ENCODE measurements at regions of chr6 and their contacts with region 1.

Region 1: GRCh38 chr6:32984605-32985389 is 16.4 kb downstream of the BRD2 start:
- DNase-seq: peak; percentile 93
- ATAC-seq: peak; percentile 78
- H3K4me3 Mint-ChIP-seq: no peak overlapping the region
- H3K27ac Mint-ChIP-seq: peak overlapping the region; percentile 58
- H3K4me1 Mint-ChIP-seq: peaks cover 25% of the 10 kb centered on the region
- H3K27me3 Mint-ChIP-seq: peaks cover 3% of the 10 kb centered on the region

Region 2: GRCh38 chr6:32666420-32667300 is 318.1 kb before region 1 on chr6 and contains the start of gene HLA-DQB1:
- CTCF ChIA-PET with region 1: no interaction called
- POLR2A ChIA-PET with region 1: no interaction called
- DNase-seq: peak; percentile 74
- ATAC-seq: peak; percentile 86
- H3K4me3 Mint-ChIP-seq: peak within 1 kb of the TSS; percentile 75
- H3K27ac Mint-ChIP-seq: peak within 1 kb of the TSS; percentile 47
- H3K4me1 Mint-ChIP-seq: peaks cover 35% of the 10 kb centered on the region
- H3K27me3 Mint-ChIP-seq: peaks cover 37% of the 10 kb centered on the region
- total RNA-seq, gene HLA-DQB1: 13.4 to 15.1 TPM

Region 3: GRCh38 chr6:32853541-32854375 is 131.0 kb before region 1 on chr6 and contains the starts of genes PSMB9 and TAP1:
- CTCF ChIA-PET with region 1: interaction called, 12 read pairs
- POLR2A ChIA-PET with region 1: interaction called, 7 read pairs
- DNase-seq: peak; percentile 97
- ATAC-seq: peak; percentile 85
- H3K4me3 Mint-ChIP-seq: peak within 1 kb of the TSS; percentile 97
- H3K27ac Mint-ChIP-seq: peak within 1 kb of the TSS; percentile 100
- H3K4me1 Mint-ChIP-seq: peaks cover 58% of the 10 kb centered on the region
- H3K27me3 Mint-ChIP-seq: no peaks in the 10 kb centered on the region
- total RNA-seq, gene PSMB9: 319 to 325 TPM
- total RNA-seq, gene TAP1: 319 to 328 TPM

Region 4: GRCh38 chr6:32885698-32886286 is 99.0 kb before region 1 on chr6:
- CTCF ChIA-PET with region 1: interaction called, 133 read pairs
- POLR2A ChIA-PET with region 1: interaction called, 5 read pairs
- DNase-seq: no peak
- ATAC-seq: peak; percentile 61
- H3K4me3 Mint-ChIP-seq: no peak overlapping the region
- H3K27ac Mint-ChIP-seq: no peak overlapping the region
- H3K4me1 Mint-ChIP-seq: peaks cover 2% of the 10 kb centered on the region
- H3K27me3 Mint-ChIP-seq: peaks cover 16% of the 10 kb centered on the region

Region 5: GRCh38 chr6:32912951-32913350 is 71.8 kb before region 1 on chr6:
- CTCF ChIA-PET with region 1: interaction called, 26 read pairs
- POLR2A ChIA-PET with region 1: no interaction called
- DNase-seq: no peak
- ATAC-seq: no peak
- H3K4me3 Mint-ChIP-seq: no peak overlapping the region
- H3K27ac Mint-ChIP-seq: no peak overlapping the region
- H3K4me1 Mint-ChIP-seq: peaks cover 1% of the 10 kb centered on the region
- H3K27me3 Mint-ChIP-seq: peaks cover 38% of the 10 kb centered on the region

Region 6: GRCh38 chr6:32947552-32948465 is 37.0 kb before region 1 on chr6:
- CTCF ChIA-PET with region 1: interaction called, 240 read pairs
- POLR2A ChIA-PET with region 1: no interaction called
- DNase-seq: peak; percentile 67
- ATAC-seq: no peak
- H3K4me3 Mint-ChIP-seq: no peak overlapping the region
- H3K27ac Mint-ChIP-seq: no peak overlapping the region
- H3K4me1 Mint-ChIP-seq: peaks cover 78% of the 10 kb centered on the region
- H3K27me3 Mint-ChIP-seq: no peaks in the 10 kb centered on the region

Region 7: DNA sequence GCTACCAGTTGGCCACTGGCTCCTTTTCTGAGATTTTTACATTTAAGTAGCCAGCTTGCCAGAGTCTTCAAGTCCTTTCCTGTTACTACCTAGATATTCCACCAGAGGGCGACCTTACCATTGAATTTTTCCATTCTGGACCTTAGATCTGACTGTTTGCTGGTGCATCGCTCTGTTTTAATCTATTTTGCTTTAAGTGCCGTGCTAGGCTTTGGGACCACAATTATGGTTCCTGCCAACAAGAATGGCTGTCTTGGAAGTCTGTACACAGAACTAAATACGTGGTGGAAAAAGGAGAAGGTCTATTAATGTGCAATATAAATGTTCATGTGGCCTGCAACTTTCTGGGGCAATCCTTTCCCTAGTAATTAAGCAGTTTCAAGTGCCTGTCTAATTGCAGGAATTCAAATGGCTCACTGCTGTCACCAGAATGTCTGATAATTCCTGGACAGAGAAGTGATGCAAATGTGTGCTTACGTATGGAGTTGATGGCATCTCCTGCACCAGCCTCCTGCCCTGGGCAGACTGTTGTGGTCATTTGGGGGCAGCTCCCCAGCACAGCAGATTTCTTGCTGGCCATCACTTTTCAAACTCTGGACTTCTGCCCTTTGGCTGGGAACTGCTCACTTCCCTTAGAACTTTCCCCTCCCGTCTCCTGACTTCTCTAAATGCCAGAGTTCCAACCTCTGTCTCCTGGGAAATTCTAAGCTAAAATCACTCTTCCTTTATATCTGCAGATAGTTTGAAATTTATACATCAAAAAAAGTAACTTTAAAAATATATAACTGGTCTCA is 30.2 kb after region 1 on chr6:
- CTCF ChIA-PET with region 1: interaction called, 13 read pairs
- POLR2A ChIA-PET with region 1: interaction called, 3 read pairs
- DNase-seq: peak; percentile 78
- ATAC-seq: peak; percentile 57
- H3K4me3 Mint-ChIP-seq: no peak overlapping the region
- H3K27ac Mint-ChIP-seq: no peak overlapping the region
- H3K4me1 Mint-ChIP-seq: peaks cover 28% of the 10 kb centered on the region
- H3K27me3 Mint-ChIP-seq: peaks cover 6% of the 10 kb centered on the region